ENCODE measurements at regions of chr3 and their contacts with region 1.

Region 1: GRCh38 chr3:128845778-128846485 is 33.5 kb upstream of the ACAD9 start:
- DNase-seq: peak; percentile 86 to 91
- ATAC-seq: peak; percentile 91 to 96 (median 94)
- H3K4me3 ChIP-seq: peak overlapping the region; percentile 20 to 70 (median 56)
- H3K27ac ChIP-seq: peak overlapping the region; percentile 67 to 88 (median 83)
- H3K4me1 ChIP-seq: peaks cover 0 to 20% (median 15%) of the 10 kb centered on the region in 9 donors
- H3K27me3 ChIP-seq: no peaks in the 10 kb centered on the region
- CTCF ChIP-seq: peak; percentile 43 to 76 (median 70)

Region 2: DNA sequence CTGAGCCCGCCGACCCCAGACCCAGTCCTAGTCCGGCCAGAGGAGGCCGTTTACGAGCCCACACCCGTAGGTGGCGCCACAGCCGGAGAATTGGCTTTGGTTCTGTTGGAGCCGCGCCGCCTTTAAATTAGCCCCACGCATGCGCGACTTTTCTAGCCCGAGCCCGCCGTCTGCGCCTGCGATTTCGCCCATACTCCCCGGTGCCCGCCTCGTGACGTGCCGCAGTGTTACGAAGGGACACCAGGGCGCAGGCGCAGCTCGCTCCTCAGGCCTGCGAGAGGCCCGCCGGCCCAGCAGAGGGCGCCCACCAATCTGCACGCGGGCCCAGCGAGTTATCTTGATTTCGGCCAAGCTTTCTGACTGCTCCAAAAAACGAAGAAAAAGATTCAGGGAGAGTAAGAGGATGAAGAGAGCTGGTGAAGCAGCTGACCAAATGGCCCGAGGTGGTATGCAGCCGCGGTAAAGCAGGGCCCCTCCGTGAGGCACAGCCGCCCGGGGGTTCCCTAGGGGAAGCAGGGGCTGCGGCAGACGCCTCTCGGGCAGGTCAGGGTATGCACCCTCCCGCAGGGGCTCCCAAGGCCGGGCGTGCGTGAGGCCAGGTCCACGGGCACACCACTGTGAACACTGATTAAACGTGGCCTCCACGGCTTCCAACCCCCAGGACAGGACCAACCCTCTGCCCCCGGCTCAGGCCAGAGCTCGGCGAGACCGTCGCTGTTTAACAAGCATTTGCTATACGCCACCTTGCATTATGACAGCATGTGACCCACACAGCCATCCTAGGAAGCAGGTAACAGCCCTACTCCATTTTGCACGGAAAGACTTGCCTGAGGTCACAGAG is 228.2 kb before region 1 on chr3:
- intact Hi-C with region 1: loop called in 7 of 10 experiments (anchors 2 to 10 kb)
- DNase-seq: peak; percentile 97 to 99
- ATAC-seq: peak; percentile 94 to 99 (median 98)
- H3K4me3 ChIP-seq: peak overlapping the region; percentile 63 to 95 (median 80)
- H3K27ac ChIP-seq: peak overlapping the region; percentile 41 to 90 (median 84)
- H3K4me1 ChIP-seq: peaks cover 10 to 33% (median 22%) of the 10 kb centered on the region in 9 donors
- H3K27me3 ChIP-seq: no peaks in the 10 kb centered on the region
- CTCF ChIP-seq: peak; percentile 87 to 99 (median 98)

Region 3: GRCh38 chr3:128714887-128715491 is 130.9 kb before region 1 on chr3:
- intact Hi-C with region 1: loop called in 1 of 10 experiments (anchors 10 kb)
- DNase-seq: no peak
- ATAC-seq: peak in 5 of 8 donors; percentile 30 to 72 (median 67)
- H3K4me3 ChIP-seq: no peak overlapping the region
- H3K27ac ChIP-seq: peak overlapping the region in 1 of 10 donors; percentile 13
- H3K4me1 ChIP-seq: peaks cover 0 to 23% (median 0%) of the 10 kb centered on the region in 9 donors
- H3K27me3 ChIP-seq: no peaks in the 10 kb centered on the region
- CTCF ChIP-seq: no peak

Region 4: DNA sequence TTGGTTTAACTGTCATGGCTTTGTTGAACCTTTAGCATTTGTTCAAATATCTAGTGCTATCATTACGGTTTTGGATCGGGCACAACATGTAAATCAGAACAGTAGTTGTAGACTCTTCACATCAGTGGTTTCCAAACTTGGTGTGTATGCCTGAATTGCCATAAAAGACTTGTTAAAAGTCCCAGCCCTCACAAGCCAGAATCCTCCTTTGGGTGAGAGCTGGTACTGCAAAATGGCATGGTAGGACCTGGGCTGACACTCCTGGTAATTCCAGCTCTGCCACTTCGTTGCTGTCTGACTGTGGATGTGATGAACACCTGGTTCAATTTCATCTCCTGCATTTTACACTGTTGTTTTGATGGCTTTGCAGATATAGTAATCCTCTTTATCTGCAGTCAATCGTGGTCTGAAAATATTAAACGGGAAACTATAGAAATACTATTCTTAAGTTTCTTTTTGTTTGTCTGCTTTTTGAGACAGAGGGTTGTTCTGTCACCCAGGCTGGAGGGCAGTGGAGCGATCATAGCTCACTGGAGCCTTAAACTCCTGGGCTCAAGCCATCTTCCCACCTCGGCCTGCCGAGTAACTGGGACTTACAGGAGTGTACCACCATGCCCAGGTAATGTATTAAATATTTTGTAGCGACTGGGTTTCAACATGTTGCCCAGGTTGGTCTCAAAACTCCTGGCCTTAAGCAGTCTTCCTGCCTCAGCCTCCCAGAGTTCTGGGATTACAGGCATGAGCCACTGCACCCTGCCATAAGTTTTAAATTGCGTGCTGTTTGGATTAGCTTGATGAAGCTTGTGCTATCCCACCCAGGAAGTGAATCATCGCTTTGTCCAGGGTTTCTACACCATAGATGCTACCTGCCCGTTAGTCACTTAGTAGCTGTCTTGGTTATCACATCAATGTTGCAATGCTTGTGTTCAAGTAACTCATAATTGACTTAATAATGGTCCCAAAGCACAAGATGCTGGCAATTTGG is 58.4 kb before region 1 on chr3:
- intact Hi-C with region 1: loop called in 3 of 10 experiments (anchors 2 to 10 kb)
- DNase-seq: no peak
- ATAC-seq: no peak
- H3K4me3 ChIP-seq: no peak overlapping the region
- H3K27ac ChIP-seq: peak overlapping the region in 6 of 10 donors; percentile 0 to 83 (median 60)
- H3K4me1 ChIP-seq: peaks cover 32 to 100% (median 91%) of the 10 kb centered on the region in 9 donors
- H3K27me3 ChIP-seq: no peaks in the 10 kb centered on the region
- CTCF ChIP-seq: peak in 6 of 9 donors; percentile 15 to 33 (median 26)

Region 5: DNA sequence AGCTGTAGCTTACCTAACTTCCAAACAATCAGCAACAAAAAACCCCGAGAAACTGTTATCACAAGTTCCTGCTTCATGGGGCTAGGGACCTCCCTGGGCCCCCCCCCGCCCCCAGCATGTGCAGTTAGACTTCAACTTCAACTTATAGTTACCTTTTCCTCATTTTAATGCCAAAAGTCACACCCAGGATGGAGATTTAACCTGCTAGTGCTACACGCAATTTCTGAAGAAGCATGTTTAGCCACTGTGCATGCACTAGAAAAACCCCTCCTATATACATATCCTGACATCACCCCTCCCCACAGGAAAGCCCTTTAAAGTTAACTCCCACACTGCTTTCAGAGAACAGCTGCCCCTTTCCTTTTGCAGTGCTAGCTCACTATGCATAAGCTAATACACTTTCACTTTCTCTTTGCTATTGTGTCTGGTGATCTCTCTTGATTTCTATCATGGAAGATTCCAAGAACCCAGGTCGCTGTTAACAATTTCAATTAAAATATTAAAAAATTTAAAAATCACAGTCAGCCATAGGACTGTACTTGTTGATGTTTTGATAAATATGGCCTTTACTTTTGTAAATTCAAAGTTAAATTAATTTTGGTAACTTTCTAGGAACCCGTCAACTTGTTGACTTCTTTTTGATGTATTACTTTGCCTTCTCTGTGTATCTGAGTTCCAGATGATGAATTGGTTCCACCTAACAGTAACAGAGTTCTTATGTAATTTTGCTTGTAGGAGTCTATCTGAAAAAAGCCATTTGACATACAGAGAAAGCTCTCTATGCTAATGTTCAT is 41.7 kb before region 1 on chr3:
- intact Hi-C with region 1: loop called in 3 of 10 experiments (anchors 1 to 10 kb)
- DNase-seq: no peak
- ATAC-seq: peak in 7 of 8 donors; percentile 30 to 64 (median 51)
- H3K4me3 ChIP-seq: peak overlapping the region in 8 of 10 donors; percentile 10 to 44 (median 24)
- H3K27ac ChIP-seq: peak overlapping the region in 9 of 10 donors; percentile 32 to 88 (median 81)
- H3K4me1 ChIP-seq: peaks cover 4 to 94% (median 80%) of the 10 kb centered on the region in 9 donors
- H3K27me3 ChIP-seq: no peaks in the 10 kb centered on the region
- CTCF ChIP-seq: no peak